Dendritic cell treated with granulocyte-macrophage colony-stimulating factor and Interleukin-4, amounts not matched to agents 40 ng/mL and 50 ng/mL, for 4 days (primary cell): ENCODE measurements at regions of chr20 and their contacts with region 1.

Region 1: DNA sequence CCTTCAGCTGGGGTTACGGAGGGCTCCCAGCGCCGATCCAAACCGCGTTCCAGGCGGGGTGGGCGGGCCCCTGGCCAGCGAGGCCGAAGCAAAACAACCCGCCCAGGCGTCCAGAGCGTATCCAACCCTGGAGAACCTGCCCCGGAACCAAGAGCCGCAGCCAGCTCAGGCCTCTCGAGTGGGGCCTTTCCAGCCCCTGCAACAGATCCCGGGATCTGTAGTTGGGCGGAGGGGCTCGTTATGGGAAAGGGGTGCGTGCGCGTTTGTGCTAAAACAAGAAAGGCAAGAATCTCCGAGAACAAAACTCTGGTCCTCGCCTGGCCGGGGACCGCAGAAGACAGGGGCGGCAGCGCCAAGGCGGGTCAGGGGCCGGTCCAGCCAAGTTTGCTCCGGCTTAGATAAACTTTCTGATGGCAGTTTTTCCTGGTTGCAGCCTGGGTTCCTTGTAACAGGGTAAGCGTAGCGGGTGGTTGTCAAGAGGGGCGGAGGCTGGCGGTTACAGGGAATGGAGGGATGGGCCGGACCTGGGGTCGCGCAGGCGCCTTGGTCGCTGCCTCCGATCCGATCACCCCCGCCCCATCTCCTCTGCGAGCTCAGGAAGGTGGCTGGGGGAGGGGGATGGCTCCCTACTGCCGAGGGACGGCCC is 448 bp upstream of the RIN2 start:
- H3K4me3 Mint-ChIP-seq: peak overlapping the region; percentile 99
- H3K27ac Mint-ChIP-seq: peak overlapping the region; percentile 100
- H3K4me1 Mint-ChIP-seq: peaks cover 69% of the 10 kb centered on the region
- H3K27me3 Mint-ChIP-seq: peaks cover 5% of the 10 kb centered on the region

Region 2: GRCh38 chr20:19661717-19662636 is 95.6 kb before region 1 on chr20:
- intact Hi-C with region 1: no loop called
- H3K4me3 Mint-ChIP-seq: no peak overlapping the region
- H3K27ac Mint-ChIP-seq: no peak overlapping the region
- H3K4me1 Mint-ChIP-seq: peaks cover 44% of the 10 kb centered on the region
- H3K27me3 Mint-ChIP-seq: peaks cover 31% of the 10 kb centered on the region

Region 3: GRCh38 chr20:19706463-19706862 is 51.1 kb before region 1 on chr20:
- intact Hi-C with region 1: loop called (anchors 5 kb)
- H3K4me3 Mint-ChIP-seq: no peak overlapping the region
- H3K27ac Mint-ChIP-seq: no peak overlapping the region
- H3K4me1 Mint-ChIP-seq: peaks cover 22% of the 10 kb centered on the region
- H3K27me3 Mint-ChIP-seq: peaks cover 1% of the 10 kb centered on the region

Region 4: DNA sequence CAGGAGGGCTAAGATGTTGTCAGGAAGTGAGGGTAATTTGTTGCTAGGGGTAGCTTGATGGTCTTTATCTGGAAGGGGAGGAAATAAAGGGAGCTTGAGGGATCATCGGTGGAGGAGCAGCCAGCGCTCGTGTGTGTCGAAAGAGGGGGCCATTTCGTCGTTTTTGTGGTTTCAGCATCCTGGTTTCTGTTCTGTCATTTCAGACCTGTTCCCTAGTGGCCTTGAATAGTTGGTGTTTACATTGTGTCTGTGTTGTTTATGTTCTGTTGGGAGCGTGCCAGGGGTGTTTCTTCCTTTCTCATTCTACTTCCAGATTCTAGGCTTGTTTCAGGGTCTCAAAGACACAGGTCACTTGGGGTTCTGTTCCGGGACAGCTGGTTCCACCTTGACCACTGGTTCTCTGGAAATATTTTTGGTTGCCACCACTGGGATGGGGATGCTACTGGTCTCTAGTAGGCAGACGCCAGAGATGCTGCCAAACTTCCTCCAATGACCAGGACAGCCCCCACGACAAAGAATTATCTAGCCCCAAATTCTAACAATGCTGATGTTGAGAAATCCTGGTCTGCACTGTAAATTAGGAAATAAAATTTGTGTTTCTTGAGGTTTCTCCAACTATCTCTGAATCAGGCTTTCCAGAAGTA is 145.7 kb after region 1 on chr20:
- intact Hi-C with region 1: no loop called
- H3K4me3 Mint-ChIP-seq: no peak overlapping the region
- H3K27ac Mint-ChIP-seq: peak overlapping the region; percentile 85
- H3K4me1 Mint-ChIP-seq: peaks cover 55% of the 10 kb centered on the region
- H3K27me3 Mint-ChIP-seq: no peaks in the 10 kb centered on the region